PC-9 (cell line): ENCODE measurements at regions of chr2 and their contacts with region 1.

Region 1: GRCh38 chr2:9003616-9004337 is at the start of gene MBOAT2:
- DNase-seq: peak; percentile 72 to 89
- H3K4me3 ChIP-seq: peak within 1 kb of the TSS; percentile 83
- H3K27ac ChIP-seq: peak within 1 kb of the TSS; percentile 97
- H3K4me1 ChIP-seq: peaks cover 47% of the 10 kb centered on the region
- H3K27me3 ChIP-seq: no peaks in the 10 kb centered on the region
- CTCF ChIP-seq: no peak
- total RNA-seq, gene MBOAT2: 45.3 and 57.7 TPM in 2 replicates

Region 2: DNA sequence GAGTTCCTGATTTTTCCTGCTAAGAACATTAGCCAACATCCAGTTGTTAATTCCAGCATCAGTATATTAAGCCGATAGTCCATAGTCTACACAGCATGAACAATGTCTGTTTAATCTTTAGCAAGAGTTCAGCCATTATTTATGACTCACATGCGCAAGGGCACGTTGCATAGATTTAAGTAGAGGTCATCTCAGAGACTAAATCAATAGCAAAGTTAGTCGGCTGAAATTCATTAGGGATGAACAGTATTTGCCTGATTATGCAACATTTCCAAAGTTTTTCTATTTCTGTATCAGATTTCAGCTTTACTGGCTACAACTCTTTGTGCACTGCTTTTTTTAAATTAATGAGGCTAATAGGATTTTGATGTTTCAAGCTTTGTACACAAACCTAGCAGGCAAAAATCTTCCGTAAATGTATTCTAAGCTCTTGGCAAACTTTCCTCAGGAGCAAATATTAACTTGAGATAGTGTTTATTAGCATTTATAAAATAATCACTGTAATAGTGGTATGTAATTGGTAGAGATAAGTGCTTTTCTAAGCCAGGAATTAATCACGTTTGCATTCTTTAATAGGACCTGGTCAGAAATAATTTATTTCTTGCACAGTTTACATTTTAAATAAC is 900.6 kb before region 1 on chr2:
- CTCF ChIA-PET with region 1: no interaction called
- POLR2A ChIA-PET with region 1: no interaction called
- intact Hi-C with region 1: no loop called
- DNase-seq: no peak
- H3K4me3 ChIP-seq: no peak overlapping the region
- H3K27ac ChIP-seq: no peak overlapping the region
- H3K4me1 ChIP-seq: no peaks in the 10 kb centered on the region
- H3K27me3 ChIP-seq: peaks cover 13% of the 10 kb centered on the region; the same call in 1 of the 2 replicates
- CTCF ChIP-seq: no peak

Region 3: GRCh38 chr2:8872821-8873432 is 130.8 kb before region 1 on chr2:
- CTCF ChIA-PET with region 1: no interaction called
- POLR2A ChIA-PET with region 1: no interaction called
- intact Hi-C with region 1: loop called (anchors 10 kb)
- DNase-seq: peak; percentile 2 to 56
- H3K4me3 ChIP-seq: no peak overlapping the region
- H3K27ac ChIP-seq: no peak overlapping the region
- H3K4me1 ChIP-seq: no peaks in the 10 kb centered on the region
- H3K27me3 ChIP-seq: no peaks in the 10 kb centered on the region
- CTCF ChIP-seq: peak; percentile 82

Region 4: DNA sequence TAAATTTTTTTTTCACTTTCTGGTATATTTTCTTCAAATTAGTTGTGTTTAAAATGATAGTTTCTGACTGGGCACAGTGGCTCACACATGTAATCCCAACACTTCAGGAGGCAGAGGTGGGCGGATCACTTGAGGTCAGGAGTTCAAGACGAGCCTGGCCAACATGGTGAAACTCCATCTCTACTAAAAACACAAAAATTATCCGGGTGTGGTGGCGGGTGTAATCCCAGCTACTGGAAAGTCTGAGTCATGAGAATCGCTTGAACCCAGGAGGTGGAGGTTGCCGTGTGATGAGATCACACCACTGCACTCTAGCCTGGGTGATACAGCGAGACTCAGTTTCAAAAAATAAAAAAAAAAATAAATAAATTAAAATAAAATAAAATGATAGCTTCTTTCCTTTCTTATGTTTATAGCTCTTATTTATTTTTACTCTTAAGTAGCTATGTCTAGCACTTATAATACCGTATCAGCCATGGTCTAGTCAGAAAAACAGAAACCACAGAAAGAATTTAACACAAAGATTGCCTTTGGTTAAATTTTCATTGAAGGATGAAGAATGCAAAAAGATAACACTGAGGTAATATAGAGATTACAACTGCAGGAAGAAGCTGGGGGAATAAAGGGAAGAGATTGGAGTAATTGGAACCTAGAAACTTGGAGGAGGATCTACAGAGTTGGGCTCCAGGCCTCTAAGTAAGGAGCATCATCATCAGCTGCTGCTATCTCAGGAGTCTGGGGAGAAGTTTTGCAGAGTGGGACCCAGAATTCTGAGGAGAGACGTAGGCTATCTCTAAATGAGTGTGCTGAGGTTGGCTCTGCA is 54.4 kb after region 1 on chr2:
- CTCF ChIA-PET with region 1: no interaction called
- POLR2A ChIA-PET with region 1: interaction called, 7 read pairs
- intact Hi-C with region 1: loop called (anchors 5 kb)
- DNase-seq: peak in 1 of 2 experiments; percentile 45
- H3K4me3 ChIP-seq: no peak overlapping the region
- H3K27ac ChIP-seq: no peak overlapping the region; the same call in 1 of the 2 replicates
- H3K4me1 ChIP-seq: peaks cover 7% of the 10 kb centered on the region
- H3K27me3 ChIP-seq: no peaks in the 10 kb centered on the region
- CTCF ChIP-seq: no peak

Region 5: DNA sequence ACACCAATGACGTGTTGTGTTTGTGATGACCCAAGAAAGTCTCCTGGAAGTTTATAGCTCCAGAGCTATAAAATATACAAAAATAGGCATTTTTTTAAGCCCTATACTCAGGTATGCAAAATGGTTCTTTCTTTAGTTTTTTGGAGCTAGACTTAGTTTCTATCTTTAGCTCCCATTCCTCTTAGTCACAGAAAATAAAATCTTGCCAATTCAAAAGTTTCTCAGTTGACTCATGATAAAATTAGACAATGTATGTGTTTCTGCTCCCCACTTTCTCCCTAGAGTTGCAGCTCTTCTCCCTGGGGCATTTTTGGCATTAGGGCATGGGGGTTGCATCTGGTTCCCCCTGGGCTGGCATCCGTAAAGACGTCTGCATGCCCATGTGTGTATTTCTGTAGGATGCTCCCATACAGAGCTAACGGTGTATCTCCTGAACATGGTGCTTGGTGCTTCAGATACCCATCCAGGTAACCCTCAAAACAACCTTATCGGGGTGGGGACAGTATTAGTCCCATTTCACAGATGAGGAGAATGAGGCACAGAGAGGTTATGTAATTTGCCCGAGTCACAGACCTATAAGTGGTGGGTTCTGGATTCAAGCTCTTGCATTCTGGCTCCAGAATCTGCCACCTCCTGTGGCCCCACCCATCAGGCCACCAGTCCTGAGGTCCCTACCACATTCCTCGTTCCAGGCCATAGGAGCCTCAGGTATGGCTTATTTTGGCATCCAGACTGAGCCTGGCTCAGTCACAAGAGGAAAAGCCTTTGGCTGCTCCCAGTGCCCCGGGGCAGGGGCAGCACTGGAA is 159.7 kb after region 1 on chr2:
- CTCF ChIA-PET with region 1: no interaction called
- POLR2A ChIA-PET with region 1: no interaction called
- intact Hi-C with region 1: no loop called
- DNase-seq: peak; percentile 76 to 85
- H3K4me3 ChIP-seq: no peak overlapping the region
- H3K27ac ChIP-seq: peak overlapping the region; percentile 52
- H3K4me1 ChIP-seq: peaks cover 48% of the 10 kb centered on the region
- H3K27me3 ChIP-seq: no peaks in the 10 kb centered on the region
- CTCF ChIP-seq: no peak